Activated naive CD8-positive, alpha-beta T cell treated with anti-CD3 and anti-CD28 coated beads, Interleukin-2, amount 10 ng/mL, durations not matched to agents 7 days and 5 days (primary cell): ENCODE measurements at regions of chr7 and their contacts with region 1.

Region 1: GRCh38 chr7:150737265-150738055 is at the start of gene GIMAP5:
- DNase-seq: peak; percentile 67
- ATAC-seq: peak; percentile 77
- H3K4me3 Mint-ChIP-seq: peak within 1 kb of the TSS; percentile 98
- H3K27ac Mint-ChIP-seq: peak within 1 kb of the TSS; percentile 98
- H3K4me1 Mint-ChIP-seq: peaks cover 72% of the 10 kb centered on the region
- H3K27me3 Mint-ChIP-seq: no peaks in the 10 kb centered on the region
- total RNA-seq, gene GIMAP5: 112 to 123 TPM

Region 2: GRCh38 chr7:150580638-150581394 is 156.6 kb before region 1 on chr7:
- POLR2A ChIA-PET with region 1: no interaction called
- DNase-seq: no peak
- ATAC-seq: no peak
- H3K4me3 Mint-ChIP-seq: no peak overlapping the region
- H3K27ac Mint-ChIP-seq: no peak overlapping the region
- H3K4me1 Mint-ChIP-seq: peaks cover 19% of the 10 kb centered on the region
- H3K27me3 Mint-ChIP-seq: no peaks in the 10 kb centered on the region

Region 3: GRCh38 chr7:150631866-150632864 is 105.3 kb before region 1 on chr7 and contains the start of gene GIMAP6:
- POLR2A ChIA-PET with region 1: interaction called, 13 read pairs
- DNase-seq: no peak
- ATAC-seq: peak; percentile 63
- H3K4me3 Mint-ChIP-seq: peak within 1 kb of the TSS; percentile 93
- H3K27ac Mint-ChIP-seq: peak within 1 kb of the TSS; percentile 94
- H3K4me1 Mint-ChIP-seq: peaks cover 46% of the 10 kb centered on the region
- H3K27me3 Mint-ChIP-seq: no peaks in the 10 kb centered on the region
- total RNA-seq, gene GIMAP6: 124 to 130 TPM

Region 4: GRCh38 chr7:150685219-150686029 is 52.0 kb before region 1 on chr7 and contains the start of gene GIMAP2:
- POLR2A ChIA-PET with region 1: interaction called, 27 read pairs
- DNase-seq: no peak
- ATAC-seq: peak; percentile 85
- H3K4me3 Mint-ChIP-seq: peak within 1 kb of the TSS; percentile 98
- H3K27ac Mint-ChIP-seq: peak within 1 kb of the TSS; percentile 98
- H3K4me1 Mint-ChIP-seq: peaks cover 64% of the 10 kb centered on the region
- H3K27me3 Mint-ChIP-seq: no peaks in the 10 kb centered on the region
- total RNA-seq, gene GIMAP2: 139 to 140 TPM

Region 5: DNA sequence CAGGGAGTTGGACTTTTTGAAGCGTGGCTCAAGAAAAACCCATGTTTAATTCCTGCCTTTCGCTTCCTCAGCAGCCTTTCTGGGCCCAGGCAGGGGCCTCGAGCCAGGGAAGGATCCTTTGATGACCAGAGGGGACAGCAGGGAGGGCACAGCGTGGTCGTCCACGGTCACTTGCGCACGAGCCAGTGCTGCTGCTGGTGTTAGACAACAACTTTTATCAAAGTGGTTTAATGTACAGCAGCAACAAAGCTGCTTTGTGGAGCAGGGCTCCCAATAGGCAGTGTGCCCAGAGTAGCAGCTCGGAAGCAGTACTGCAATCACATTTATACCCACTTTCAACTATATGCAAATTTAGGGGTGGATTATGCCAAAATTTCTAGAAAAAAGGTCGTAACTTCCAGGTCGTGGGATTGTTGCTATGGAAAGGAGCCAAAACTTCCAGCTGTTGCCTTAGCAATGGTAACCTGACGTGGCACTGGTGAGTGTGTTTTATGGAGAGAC is 15.0 kb before region 1 on chr7:
- POLR2A ChIA-PET with region 1: interaction called, 37 read pairs
- DNase-seq: no peak
- ATAC-seq: peak; percentile 23
- H3K4me3 Mint-ChIP-seq: peak overlapping the region; percentile 61
- H3K27ac Mint-ChIP-seq: peak overlapping the region; percentile 39
- H3K4me1 Mint-ChIP-seq: peaks cover 58% of the 10 kb centered on the region
- H3K27me3 Mint-ChIP-seq: no peaks in the 10 kb centered on the region